ENCODE measurements at regions of chr1 and their contacts with region 1.

Region 1: GRCh38 chr1:198681831-198682759 is 43.3 kb downstream of the PTPRC start:
- DNase-seq: peak; percentile 57 to 97 (median 76)
- ATAC-seq: peak; percentile 72
- H3K4me3 ChIP-seq: peak overlapping the region; percentile 21
- H3K4me3 Mint-ChIP-seq: peak overlapping the region; percentile 78
- H3K27ac ChIP-seq: peak overlapping the region; percentile 89 to 91
- H3K27ac Mint-ChIP-seq: peak overlapping the region; percentile 100
- H3K4me1 ChIP-seq: peaks cover 32% of the 10 kb centered on the region
- H3K4me1 Mint-ChIP-seq: peaks cover 86% of the 10 kb centered on the region
- H3K27me3 ChIP-seq: no peaks in the 10 kb centered on the region
- H3K27me3 Mint-ChIP-seq: no peaks in the 10 kb centered on the region
- CTCF ChIP-seq: no peak

Region 2: DNA sequence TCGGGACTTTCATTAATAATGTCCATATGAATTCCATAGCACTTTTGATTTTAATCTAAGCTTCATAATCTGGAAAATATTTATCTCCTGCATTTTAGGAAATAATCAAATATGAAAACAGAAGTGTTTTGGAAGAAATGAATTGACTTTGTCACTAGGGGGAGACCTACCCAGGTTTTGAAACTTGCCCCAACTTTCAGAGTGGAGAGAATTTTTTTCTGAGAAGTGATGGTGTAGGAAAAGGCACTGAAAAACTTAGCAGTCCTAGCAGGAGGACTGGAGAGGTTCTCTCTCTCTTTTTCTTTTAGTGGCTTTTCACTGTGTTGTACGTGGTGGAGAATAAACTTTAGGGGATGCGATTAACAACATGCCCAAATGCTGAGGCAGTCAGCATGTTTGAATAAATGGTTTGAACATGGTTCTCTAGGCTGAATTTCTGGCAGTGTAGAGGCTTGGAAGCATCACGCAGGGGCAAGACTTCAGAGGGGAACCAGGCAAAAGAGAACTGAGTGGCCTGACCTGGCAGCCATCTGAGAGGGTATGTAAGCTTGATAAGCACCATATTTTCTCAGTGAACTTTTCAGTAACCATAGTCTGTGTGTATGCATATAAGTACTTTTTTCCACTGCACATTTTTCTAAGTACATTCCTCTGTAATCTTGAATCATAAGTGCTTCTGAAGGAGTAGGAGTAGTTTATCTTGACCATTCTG is 593.6 kb before region 1 on chr1:
- CTCF ChIA-PET with region 1: no interaction called
- POLR2A ChIA-PET with region 1: no interaction called
- intact Hi-C with region 1: loop called in 1 of 2 experiments (anchors 5 kb)
- DNase-seq: peak in 3 of 14 experiments; percentile 52 to 59 (median 56)
- ATAC-seq: no peak
- H3K4me3 ChIP-seq: no peak overlapping the region
- H3K4me3 Mint-ChIP-seq: no peak overlapping the region
- H3K27ac ChIP-seq: no peak overlapping the region
- H3K27ac Mint-ChIP-seq: no peak overlapping the region
- H3K4me1 ChIP-seq: no peaks in the 10 kb centered on the region
- H3K4me1 Mint-ChIP-seq: no peaks in the 10 kb centered on the region
- H3K27me3 ChIP-seq: no peaks in the 10 kb centered on the region
- H3K27me3 Mint-ChIP-seq: no peaks in the 10 kb centered on the region
- CTCF ChIP-seq: peak; percentile 80

Region 3: DNA sequence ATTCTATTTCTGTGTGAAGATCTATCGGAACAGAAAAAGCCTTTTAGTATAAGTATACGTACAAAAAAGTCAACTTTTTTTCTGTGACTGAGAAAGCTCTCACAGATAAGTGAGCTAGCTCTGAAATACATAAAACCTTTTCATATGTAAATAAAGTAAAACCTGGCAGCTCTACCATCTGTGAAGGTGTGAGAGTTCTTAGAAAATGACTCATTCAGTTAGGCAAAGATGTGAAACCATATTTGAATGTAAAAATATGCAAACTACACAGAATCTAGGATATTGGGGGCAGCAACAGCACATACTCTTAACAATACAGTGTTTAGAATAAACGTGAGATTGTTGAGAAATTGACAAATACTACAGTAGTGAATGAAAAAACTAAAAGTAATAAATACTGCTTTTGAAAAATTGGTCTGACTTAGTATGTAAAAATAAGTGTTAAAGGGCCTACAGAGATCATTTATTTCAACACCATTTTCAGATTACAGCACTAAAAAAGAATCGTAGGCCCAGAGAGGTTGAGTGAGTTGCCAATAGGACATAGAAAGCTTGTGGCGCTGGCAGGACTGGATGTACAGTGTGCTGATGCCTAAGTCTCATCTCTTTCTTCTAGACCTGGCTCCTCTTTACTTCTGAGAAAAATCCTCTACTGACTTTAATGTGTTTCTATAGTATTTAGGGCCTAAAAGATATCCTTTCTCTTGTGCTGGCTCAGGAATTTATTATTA is 161.4 kb before region 1 on chr1:
- CTCF ChIA-PET with region 1: interaction called, 12 read pairs
- POLR2A ChIA-PET with region 1: interaction called, 39 read pairs
- intact Hi-C with region 1: loop called (anchors 1 to 2 kb)
- DNase-seq: peak in 3 of 14 experiments; percentile 44 to 74 (median 50)
- ATAC-seq: peak; percentile 52
- H3K4me3 ChIP-seq: peak overlapping the region; percentile 38
- H3K4me3 Mint-ChIP-seq: peak overlapping the region; percentile 79
- H3K27ac ChIP-seq: peak overlapping the region; percentile 48 to 60
- H3K27ac Mint-ChIP-seq: peak overlapping the region; percentile 93
- H3K4me1 ChIP-seq: peaks cover 20% of the 10 kb centered on the region
- H3K4me1 Mint-ChIP-seq: peaks cover 82% of the 10 kb centered on the region
- H3K27me3 ChIP-seq: no peaks in the 10 kb centered on the region
- H3K27me3 Mint-ChIP-seq: no peaks in the 10 kb centered on the region
- CTCF ChIP-seq: no peak

Region 4: DNA sequence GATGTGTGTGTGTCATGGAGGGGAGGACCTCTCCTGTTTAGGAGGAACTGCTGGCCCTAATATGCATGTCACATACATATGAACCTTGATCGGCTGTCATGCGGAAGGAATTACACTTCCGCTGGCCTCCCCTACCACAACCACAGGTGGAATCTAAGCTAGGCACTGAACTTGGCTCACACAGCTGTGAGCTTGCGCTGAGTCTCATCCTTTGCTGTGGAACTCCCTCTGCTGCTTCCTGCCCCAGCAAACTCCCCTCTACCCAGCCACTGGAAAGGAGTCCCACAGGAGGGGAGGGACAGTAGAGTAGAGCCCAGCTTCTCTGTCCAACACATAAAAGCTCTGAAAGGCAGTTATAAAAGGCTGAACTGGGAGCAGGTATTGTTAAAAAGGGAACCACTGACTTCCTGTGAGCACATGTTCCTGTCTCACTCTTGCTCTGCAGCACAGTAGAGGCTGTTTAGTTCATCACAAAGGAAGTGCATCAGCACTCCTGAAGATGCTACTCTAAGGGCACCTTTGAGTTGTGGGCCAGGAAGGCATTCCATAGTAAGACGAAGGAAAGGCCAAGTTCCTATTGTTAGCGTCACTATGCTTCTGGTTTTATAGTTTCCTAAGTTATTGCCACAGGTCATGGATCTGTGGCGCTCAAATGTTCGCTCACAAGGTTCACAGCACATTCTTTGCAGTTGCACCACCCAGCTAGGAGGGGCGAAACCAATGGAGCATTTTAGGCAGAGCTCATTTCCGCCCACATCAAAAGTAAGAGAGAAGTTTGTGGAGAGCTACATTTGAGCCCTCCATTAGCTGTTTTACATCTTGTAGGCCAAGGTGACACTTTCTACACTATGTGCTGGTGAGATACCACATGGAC is 60.9 kb before region 1 on chr1:
- CTCF ChIA-PET with region 1: interaction called, 13 read pairs
- POLR2A ChIA-PET with region 1: interaction called, 209 read pairs
- intact Hi-C with region 1: loop called (anchors 2 to 5 kb)
- DNase-seq: peak; percentile 43 to 89 (median 55)
- ATAC-seq: peak; percentile 78
- H3K4me3 ChIP-seq: peak overlapping the region; percentile 44
- H3K4me3 Mint-ChIP-seq: peak overlapping the region; percentile 74
- H3K27ac ChIP-seq: peak overlapping the region; percentile 83 to 84
- H3K27ac Mint-ChIP-seq: peak overlapping the region; percentile 90
- H3K4me1 ChIP-seq: peaks cover 59% of the 10 kb centered on the region
- H3K4me1 Mint-ChIP-seq: peaks cover 77% of the 10 kb centered on the region
- H3K27me3 ChIP-seq: no peaks in the 10 kb centered on the region
- H3K27me3 Mint-ChIP-seq: no peaks in the 10 kb centered on the region
- CTCF ChIP-seq: no peak

Region 5: DNA sequence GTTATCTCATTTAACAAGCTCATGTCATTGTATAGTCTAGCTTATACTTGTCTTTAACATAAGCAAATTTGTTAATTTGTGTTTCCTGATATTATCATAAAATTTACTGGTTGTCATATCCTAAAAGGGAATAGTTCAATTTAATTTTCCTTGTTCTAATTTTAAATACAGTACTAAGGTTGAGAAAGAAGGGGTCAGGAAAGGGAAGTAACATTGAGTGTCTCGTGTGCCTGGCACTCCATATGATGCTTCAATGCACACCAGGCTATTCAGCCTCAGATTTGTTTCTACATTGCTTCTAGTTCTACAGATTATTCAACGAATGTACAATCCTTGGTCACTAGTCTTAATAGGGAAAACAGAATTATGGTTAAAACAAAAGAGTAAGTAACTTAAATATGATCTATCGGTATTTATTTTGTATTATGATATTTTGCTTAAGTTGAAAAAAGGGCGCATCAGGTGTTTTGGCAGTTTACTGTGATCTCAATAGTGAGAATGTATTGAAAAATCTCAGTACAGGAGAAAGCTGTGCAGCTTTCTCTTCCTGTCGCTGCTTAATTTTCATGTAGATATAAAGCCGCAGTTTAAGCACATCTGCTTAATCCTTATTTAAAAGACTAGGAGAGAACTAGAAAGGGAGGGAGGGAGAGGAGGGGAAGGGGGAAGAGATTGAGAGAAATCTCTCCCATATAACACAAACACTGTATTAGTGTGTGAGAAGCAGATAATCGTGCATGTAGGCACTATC is 30.3 kb before region 1 on chr1:
- CTCF ChIA-PET with region 1: interaction called, 8 read pairs
- POLR2A ChIA-PET with region 1: interaction called, 317 read pairs
- intact Hi-C with region 1: loop called in 1 of 2 experiments (anchors 1 kb)
- DNase-seq: peak in 1 of 14 experiments; percentile 46
- ATAC-seq: no peak
- H3K4me3 ChIP-seq: peak overlapping the region; percentile 79
- H3K4me3 Mint-ChIP-seq: peak overlapping the region; percentile 83
- H3K27ac ChIP-seq: peak overlapping the region; percentile 81 to 85
- H3K27ac Mint-ChIP-seq: peak overlapping the region; percentile 90
- H3K4me1 ChIP-seq: peaks cover 24% of the 10 kb centered on the region
- H3K4me1 Mint-ChIP-seq: peaks cover 76% of the 10 kb centered on the region
- H3K27me3 ChIP-seq: no peaks in the 10 kb centered on the region
- H3K27me3 Mint-ChIP-seq: no peaks in the 10 kb centered on the region
- CTCF ChIP-seq: no peak

Region 6: DNA sequence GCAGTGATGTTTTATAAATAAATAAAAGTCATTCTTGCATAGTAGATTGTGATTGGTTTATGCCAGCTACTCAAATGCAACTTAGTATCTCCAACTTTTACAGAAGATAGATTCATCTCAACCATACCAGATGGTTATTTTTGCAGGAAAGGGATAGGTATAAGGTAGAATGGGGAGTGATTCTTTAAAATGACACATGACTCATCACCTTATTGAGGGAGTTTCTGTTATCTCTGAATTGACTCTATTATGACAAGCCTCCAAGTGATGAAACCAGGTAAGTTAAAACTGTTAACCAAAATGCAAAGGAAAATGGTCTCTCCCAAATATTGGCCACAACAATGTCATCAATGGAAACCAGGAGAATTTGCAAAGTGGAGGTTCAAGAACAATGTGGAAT is 11.2 kb after region 1 on chr1:
- CTCF ChIA-PET with region 1: interaction called, 4 read pairs
- POLR2A ChIA-PET with region 1: interaction called, 26 read pairs
- intact Hi-C with region 1: no loop called
- DNase-seq: no peak
- ATAC-seq: peak; percentile 48
- H3K4me3 ChIP-seq: no peak overlapping the region
- H3K4me3 Mint-ChIP-seq: peak overlapping the region; percentile 70
- H3K27ac ChIP-seq: no peak overlapping the region
- H3K27ac Mint-ChIP-seq: peak overlapping the region; percentile 82
- H3K4me1 ChIP-seq: peaks cover 17% of the 10 kb centered on the region
- H3K4me1 Mint-ChIP-seq: peaks cover 88% of the 10 kb centered on the region
- H3K27me3 ChIP-seq: no peaks in the 10 kb centered on the region
- H3K27me3 Mint-ChIP-seq: no peaks in the 10 kb centered on the region
- CTCF ChIP-seq: no peak

Region 7: GRCh38 chr1:198734323-198735008 is 52.4 kb after region 1 on chr1:
- CTCF ChIA-PET with region 1: no interaction called
- POLR2A ChIA-PET with region 1: no interaction called
- intact Hi-C with region 1: no loop called
- DNase-seq: no peak
- ATAC-seq: no peak
- H3K4me3 ChIP-seq: no peak overlapping the region
- H3K4me3 Mint-ChIP-seq: no peak overlapping the region
- H3K27ac ChIP-seq: no peak overlapping the region
- H3K27ac Mint-ChIP-seq: peak overlapping the region; percentile 57
- H3K4me1 ChIP-seq: peaks cover 4% of the 10 kb centered on the region
- H3K4me1 Mint-ChIP-seq: peaks cover 78% of the 10 kb centered on the region
- H3K27me3 ChIP-seq: no peaks in the 10 kb centered on the region
- H3K27me3 Mint-ChIP-seq: no peaks in the 10 kb centered on the region
- CTCF ChIP-seq: no peak

Region 8: GRCh38 chr1:200139661-200140250 is 1457.7 kb after region 1 on chr1:
- CTCF ChIA-PET with region 1: no interaction called
- POLR2A ChIA-PET with region 1: no interaction called
- intact Hi-C with region 1: no loop called
- DNase-seq: peak in 4 of 14 experiments; percentile 27 to 72 (median 64)
- ATAC-seq: peak; percentile 73
- H3K4me3 ChIP-seq: no peak overlapping the region
- H3K4me3 Mint-ChIP-seq: no peak overlapping the region
- H3K27ac ChIP-seq: no peak overlapping the region
- H3K27ac Mint-ChIP-seq: no peak overlapping the region
- H3K4me1 ChIP-seq: no peaks in the 10 kb centered on the region
- H3K4me1 Mint-ChIP-seq: no peaks in the 10 kb centered on the region
- H3K27me3 ChIP-seq: no peaks in the 10 kb centered on the region
- H3K27me3 Mint-ChIP-seq: no peaks in the 10 kb centered on the region
- CTCF ChIP-seq: peak; percentile 70

Measured in CD4-positive, alpha-beta T cell (primary cell).